CD8-positive, alpha-beta memory T cell (primary cell): ENCODE measurements at regions of chr5 and their contacts with region 1.

Region 1: GRCh38 chr5:134113902-134114875 is at the start of gene TCF7:
- DNase-seq: peak; percentile 74 to 87 (median 80)
- H3K4me3 ChIP-seq: peak within 1 kb of the TSS; percentile 95
- H3K4me3 Mint-ChIP-seq: peak within 1 kb of the TSS; percentile 94 to 99 (median 98)
- H3K27ac ChIP-seq: peak within 1 kb of the TSS; percentile 62
- H3K27ac Mint-ChIP-seq: peak within 1 kb of the TSS; percentile 89 to 99 (median 96)
- H3K4me1 ChIP-seq: peaks cover 55% of the 10 kb centered on the region
- H3K4me1 Mint-ChIP-seq: peaks cover 54 to 71% (median 59%) of the 10 kb centered on the region in 3 donors
- H3K27me3 ChIP-seq: no peaks in the 10 kb centered on the region
- H3K27me3 Mint-ChIP-seq: no peaks in the 10 kb centered on the region
- total RNA-seq, gene TCF7: 85.2 to 89.7 TPM

Region 2: DNA sequence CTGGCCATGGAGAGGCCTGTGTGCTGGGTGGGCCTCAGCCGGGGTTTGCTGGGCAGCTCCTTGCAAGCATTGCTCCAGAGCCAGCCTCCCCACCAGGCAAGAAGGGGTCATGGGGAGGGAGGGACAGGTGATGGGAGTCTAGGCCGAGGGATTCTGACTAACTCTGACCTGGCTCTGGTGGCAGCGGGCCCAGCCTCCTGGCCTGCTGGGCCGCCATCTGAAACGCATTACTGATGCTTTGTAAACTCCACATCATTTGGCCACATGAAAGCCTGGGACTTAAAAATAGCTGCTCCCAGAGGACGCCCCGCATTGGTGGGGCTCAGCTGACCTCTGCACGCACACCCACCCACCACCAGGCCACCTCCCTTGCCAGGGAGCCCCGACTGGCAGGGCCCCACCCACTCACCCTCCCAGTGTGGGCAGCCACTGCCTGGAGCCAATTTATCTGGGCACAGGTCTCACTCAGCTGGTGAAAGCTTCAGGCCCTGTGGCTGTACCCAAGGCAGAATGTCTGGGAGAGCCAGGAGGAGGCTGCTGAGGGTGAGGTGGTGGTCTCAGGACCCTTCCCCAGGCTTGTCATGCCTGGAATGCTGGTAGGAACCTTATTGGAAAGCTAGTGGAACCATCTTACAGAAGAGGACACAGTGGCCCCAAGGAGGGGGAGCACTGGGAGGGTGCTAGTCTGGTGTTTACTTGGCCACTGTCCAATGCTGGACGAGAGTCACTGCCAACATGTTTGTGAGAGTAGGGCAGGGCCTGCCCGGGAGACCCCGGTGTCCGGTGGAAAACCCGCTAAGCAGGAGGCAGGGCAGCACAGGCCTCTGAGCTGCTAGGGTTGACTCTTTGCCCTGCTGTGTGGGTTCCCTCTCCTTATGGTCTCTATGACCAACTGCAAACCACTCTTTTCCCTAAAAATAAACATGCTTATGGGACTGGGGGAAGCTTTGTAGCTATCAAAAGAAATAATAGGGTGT is 11.1 kb after region 1 on chr5:
- CTCF ChIA-PET with region 1: no interaction called
- POLR2A ChIA-PET with region 1: interaction called, 272 read pairs
- DNase-seq: no peak
- H3K4me3 ChIP-seq: peak overlapping the region; percentile 79
- H3K4me3 Mint-ChIP-seq: peak overlapping the region; percentile 91 to 99 (median 96)
- H3K27ac ChIP-seq: peak overlapping the region; percentile 9
- H3K27ac Mint-ChIP-seq: peak overlapping the region; percentile 92 to 100 (median 98)
- H3K4me1 ChIP-seq: peaks cover 100% of the 10 kb centered on the region
- H3K4me1 Mint-ChIP-seq: peaks cover 89 to 99% (median 99%) of the 10 kb centered on the region in 3 donors
- H3K27me3 ChIP-seq: no peaks in the 10 kb centered on the region
- H3K27me3 Mint-ChIP-seq: peaks cover 0 to 2% of the 10 kb centered on the region in 2 donors